CD14-positive monocyte (primary cell): ENCODE measurements at regions of chr1 and their contacts with region 1.

Region 1: DNA sequence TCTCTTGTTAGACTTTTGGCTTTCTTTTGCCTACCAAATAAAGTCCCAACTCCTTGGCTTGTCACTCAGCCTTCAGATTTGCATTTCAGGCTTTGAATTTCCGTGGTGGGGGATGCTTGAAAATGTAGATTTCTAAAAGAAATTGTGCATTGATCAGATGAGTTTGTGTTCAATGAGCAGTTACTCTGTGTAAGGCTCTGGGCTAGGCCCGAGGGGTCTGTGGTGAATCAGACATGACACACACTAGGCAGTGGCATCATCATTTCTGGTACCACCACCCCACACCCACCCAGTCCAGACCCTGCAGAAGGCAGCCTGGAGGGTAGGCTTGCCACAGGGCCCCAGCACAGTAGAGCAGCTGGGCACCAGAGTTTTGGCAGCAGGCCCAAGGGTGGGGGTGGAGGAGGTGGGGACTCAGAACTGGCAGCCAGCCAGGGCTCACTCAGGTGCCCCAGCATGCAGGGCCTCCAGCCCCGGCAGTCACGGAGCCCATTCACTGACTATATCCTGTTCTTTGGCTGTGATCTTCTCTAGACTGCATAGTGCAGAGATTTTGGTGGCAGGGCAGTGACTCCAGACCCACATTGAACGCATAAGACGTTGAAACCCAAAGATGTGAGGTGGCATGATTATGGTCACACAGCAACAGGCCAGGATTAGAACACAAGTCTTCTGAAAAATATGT is 97.2 kb upstream of the ARTN start:
- DNase-seq: peak in 1 of 3 donors; percentile 28
- H3K4me3 ChIP-seq: no peak overlapping the region
- H3K4me3 Mint-ChIP-seq: no peak overlapping the region
- H3K27ac ChIP-seq: no peak overlapping the region
- H3K27ac Mint-ChIP-seq: peak overlapping the region in 3 of 7 donors; percentile 33 to 41 (median 38)
- H3K4me1 ChIP-seq: peaks cover 68 to 76% of the 10 kb centered on the region in 2 donors
- H3K4me1 Mint-ChIP-seq: peaks cover 82% of the 10 kb centered on the region
- H3K27me3 ChIP-seq: no peaks in the 10 kb centered on the region
- H3K27me3 Mint-ChIP-seq: peaks cover 0 to 10% (median 0%) of the 10 kb centered on the region in 3 donors
- CTCF ChIP-seq: no peak

Region 2: GRCh38 chr1:43783671-43784205 is 52.7 kb before region 1 on chr1:
- intact Hi-C with region 1: loop called in 1 of 2 experiments (anchors 10 kb)
- DNase-seq: peak in 2 of 3 donors; percentile 42 to 67
- H3K4me3 ChIP-seq: no peak overlapping the region
- H3K4me3 Mint-ChIP-seq: no peak overlapping the region
- H3K27ac ChIP-seq: no peak overlapping the region
- H3K27ac Mint-ChIP-seq: peak overlapping the region in 6 of 7 donors; percentile 34 to 85 (median 68)
- H3K4me1 ChIP-seq: peaks cover 51 to 67% of the 10 kb centered on the region in 2 donors
- H3K4me1 Mint-ChIP-seq: peaks cover 54% of the 10 kb centered on the region
- H3K27me3 ChIP-seq: no peaks in the 10 kb centered on the region
- H3K27me3 Mint-ChIP-seq: peaks cover 0 to 2% (median 2%) of the 10 kb centered on the region in 3 donors
- CTCF ChIP-seq: no peak

Region 3: DNA sequence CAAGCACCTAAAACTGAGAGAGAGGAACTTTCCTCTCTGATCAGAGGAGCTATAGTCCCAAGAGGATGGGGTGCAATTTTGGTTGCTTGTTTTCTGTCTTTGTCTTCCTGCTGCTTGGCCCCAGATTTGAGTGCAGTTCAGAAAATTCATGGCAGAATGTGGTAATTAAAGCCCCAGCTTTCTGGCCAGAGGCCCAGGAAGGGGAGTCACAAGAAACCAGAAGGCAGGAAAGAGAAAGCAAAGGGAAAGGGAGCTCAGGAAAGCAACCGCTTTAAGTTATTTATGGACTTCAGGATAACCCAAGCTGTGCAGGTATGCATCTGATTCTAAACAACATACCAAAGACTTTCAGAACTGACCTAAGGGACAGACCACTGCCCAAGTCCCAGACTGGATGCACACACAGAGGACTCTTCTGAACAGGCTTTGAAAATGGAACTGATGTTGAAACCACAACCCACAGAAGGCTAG is 40.3 kb before region 1 on chr1:
- intact Hi-C with region 1: loop called in 1 of 2 experiments (anchors 5 kb)
- DNase-seq: no peak
- H3K4me3 ChIP-seq: peak overlapping the region in 1 of 3 experiments; percentile 8
- H3K4me3 Mint-ChIP-seq: peak overlapping the region in 1 of 2 donors; percentile 46
- H3K27ac ChIP-seq: no peak overlapping the region
- H3K27ac Mint-ChIP-seq: peak overlapping the region in 1 of 7 donors; percentile 47
- H3K4me1 ChIP-seq: peaks cover 34 to 55% of the 10 kb centered on the region in 2 donors
- H3K4me1 Mint-ChIP-seq: peaks cover 68% of the 10 kb centered on the region
- H3K27me3 ChIP-seq: no peaks in the 10 kb centered on the region
- H3K27me3 Mint-ChIP-seq: peaks cover 0 to 3% (median 0%) of the 10 kb centered on the region in 3 donors
- CTCF ChIP-seq: no peak

Region 4: GRCh38 chr1:43868741-43869067 is 32.3 kb after region 1 on chr1:
- intact Hi-C with region 1: loop called in 1 of 2 experiments (anchors 5 kb)
- DNase-seq: no peak
- H3K4me3 ChIP-seq: no peak overlapping the region
- H3K4me3 Mint-ChIP-seq: no peak overlapping the region
- H3K27ac ChIP-seq: peak overlapping the region in 1 of 2 donors; percentile 77
- H3K27ac Mint-ChIP-seq: peak overlapping the region; percentile 84 to 93 (median 91)
- H3K4me1 ChIP-seq: peaks cover 19 to 39% of the 10 kb centered on the region in 2 donors
- H3K4me1 Mint-ChIP-seq: peaks cover 42% of the 10 kb centered on the region
- H3K27me3 ChIP-seq: no peaks in the 10 kb centered on the region
- H3K27me3 Mint-ChIP-seq: peaks cover 0 to 1% (median 0%) of the 10 kb centered on the region in 3 donors
- CTCF ChIP-seq: no peak

Region 5: GRCh38 chr1:44059956-44060355 is 223.5 kb after region 1 on chr1:
- intact Hi-C with region 1: no loop called
- DNase-seq: no peak
- H3K4me3 ChIP-seq: no peak overlapping the region
- H3K4me3 Mint-ChIP-seq: no peak overlapping the region
- H3K27ac ChIP-seq: no peak overlapping the region
- H3K27ac Mint-ChIP-seq: no peak overlapping the region
- H3K4me1 ChIP-seq: no peaks in the 10 kb centered on the region
- H3K4me1 Mint-ChIP-seq: no peaks in the 10 kb centered on the region
- H3K27me3 ChIP-seq: no peaks in the 10 kb centered on the region
- H3K27me3 Mint-ChIP-seq: peaks cover 0 to 3% (median 2%) of the 10 kb centered on the region in 3 donors
- CTCF ChIP-seq: no peak